ENCODE measurements at regions of chr11 and their contacts with region 1.

Region 1: DNA sequence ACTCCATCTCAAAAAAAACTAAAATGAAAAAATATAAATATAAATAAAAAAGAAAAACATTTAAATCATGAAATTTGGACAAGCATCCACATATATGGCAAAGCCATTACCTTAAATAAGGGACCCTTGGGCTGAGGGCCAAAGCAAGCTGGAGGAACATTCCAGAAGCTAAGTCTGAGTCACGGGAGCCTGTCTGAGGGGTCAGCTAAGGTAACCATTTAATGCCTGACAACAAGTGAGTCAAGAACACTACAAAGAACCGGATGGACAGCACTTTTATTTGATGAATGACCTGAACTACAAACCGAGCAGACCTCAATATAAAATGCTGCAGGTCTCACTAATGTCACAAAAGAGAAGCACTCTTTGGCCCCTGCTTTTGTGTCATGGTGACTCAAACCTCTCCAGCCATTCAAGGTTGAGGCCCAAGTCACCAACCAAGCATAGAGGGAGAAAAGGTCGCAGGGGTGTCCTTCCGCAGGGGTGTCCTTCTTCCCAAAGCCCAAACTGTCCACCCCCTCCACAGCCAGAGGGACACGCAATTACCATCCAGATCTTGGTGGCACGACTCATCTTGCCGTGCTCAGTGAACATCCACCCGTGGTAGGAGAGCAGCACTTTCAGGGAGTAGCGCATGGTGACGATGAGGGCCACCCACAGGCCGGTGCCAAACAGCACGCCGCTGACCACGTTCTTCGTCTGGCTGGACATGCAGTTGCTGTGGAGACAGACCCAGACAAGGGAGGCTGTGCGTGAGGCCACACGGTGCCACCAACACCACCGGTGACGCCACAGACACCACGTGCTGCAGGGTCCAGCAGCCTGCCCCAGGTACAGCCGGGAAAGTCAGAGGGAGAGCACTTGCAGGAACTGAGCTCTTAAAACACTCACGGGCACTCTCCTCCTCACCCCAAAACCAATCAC is 34.5 kb downstream of the CPT1A start:
- DNase-seq: no peak
- H3K4me3 ChIP-seq: no peak overlapping the region
- H3K27ac ChIP-seq: no peak overlapping the region
- H3K4me1 ChIP-seq: no peaks in the 10 kb centered on the region
- H3K27me3 ChIP-seq: no peaks in the 10 kb centered on the region
- CTCF ChIP-seq: no peak

Region 2: GRCh38 chr11:68832476-68833181 is 25.4 kb after region 1 on chr11:
- CTCF ChIA-PET with region 1: no interaction called
- POLR2A ChIA-PET with region 1: no interaction called
- intact Hi-C with region 1: no loop called
- DNase-seq: peak in 1 of 2 experiments; percentile 50
- H3K4me3 ChIP-seq: no peak overlapping the region
- H3K27ac ChIP-seq: no peak overlapping the region
- H3K4me1 ChIP-seq: peaks cover 5% of the 10 kb centered on the region
- H3K27me3 ChIP-seq: no peaks in the 10 kb centered on the region
- CTCF ChIP-seq: no peak

Region 3: DNA sequence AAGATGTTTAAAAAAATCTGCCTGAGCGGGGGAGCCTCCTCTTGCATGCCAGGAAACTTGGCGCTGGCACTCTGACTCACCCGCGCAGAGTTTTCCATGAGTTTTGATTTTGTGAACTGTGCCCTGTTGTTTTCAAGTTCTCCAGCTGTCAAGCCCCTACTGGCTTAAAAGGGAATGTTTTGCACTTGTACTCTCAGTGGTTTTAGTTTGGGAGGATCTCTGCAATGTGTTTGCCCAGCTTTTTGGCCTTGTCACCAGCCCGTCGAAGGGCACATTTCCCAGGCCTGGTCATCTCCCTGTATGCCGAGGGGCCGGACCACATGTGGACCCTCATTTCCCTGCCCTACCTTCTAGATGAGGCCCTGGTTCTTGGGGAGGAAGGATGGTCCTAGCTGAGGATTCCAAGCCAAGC is 193.7 kb after region 1 on chr11:
- CTCF ChIA-PET with region 1: interaction called, 14 read pairs
- POLR2A ChIA-PET with region 1: no interaction called
- intact Hi-C with region 1: no loop called
- DNase-seq: peak; percentile 43 to 57
- H3K4me3 ChIP-seq: no peak overlapping the region
- H3K27ac ChIP-seq: no peak overlapping the region
- H3K4me1 ChIP-seq: no peaks in the 10 kb centered on the region
- H3K27me3 ChIP-seq: peaks cover 34% of the 10 kb centered on the region
- CTCF ChIP-seq: peak; percentile 64

Measured in PC-9 (cell line).